A549 (cell line): ENCODE measurements at regions of chr7 and their contacts with region 1.

Region 1: GRCh38 chr7:73726083-73726466 is 6.6 kb upstream of the STX1A start:
- DNase-seq: no peak
- ATAC-seq: peak; percentile 56 to 61
- H3K4me3 ChIP-seq: no peak overlapping the region
- H3K27ac ChIP-seq: peak overlapping the region; percentile 27 to 74; a peak in 4 of 6 replicates
- H3K4me1 ChIP-seq: peaks cover 20% of the 10 kb centered on the region
- CTCF ChIP-seq: no peak
- EP300 ChIP-seq: no peak
- POLR2A ChIP-seq: no peak
- RAD21 ChIP-seq: no peak

Region 2: GRCh38 chr7:73623798-73624668 is 102.0 kb before region 1 on chr7 and contains the start of gene MLXIPL:
- CTCF ChIA-PET with region 1: interaction called, 46 read pairs
- POLR2A ChIA-PET with region 1: no interaction called
- DNase-seq: peak; percentile 78 to 97
- ATAC-seq: peak; percentile 84 to 90
- H3K4me3 ChIP-seq: peak within 1 kb of the TSS; percentile 55
- H3K27ac ChIP-seq: peak within 1 kb of the TSS; percentile 71 to 92
- H3K4me1 ChIP-seq: peaks cover 25% of the 10 kb centered on the region
- CTCF ChIP-seq: no peak
- EP300 ChIP-seq: no peak
- POLR2A ChIP-seq: peak; percentile 48; the same call in 1 of the 2 replicates
- RAD21 ChIP-seq: no peak
- polyA plus RNA-seq, gene MLXIPL: 1.4 and 2.2 TPM in 2 replicates

Region 3: GRCh38 chr7:73667344-73668102 is 58.6 kb before region 1 on chr7 and contains the start of gene VPS37D:
- CTCF ChIA-PET with region 1: interaction called, 86 read pairs
- POLR2A ChIA-PET with region 1: no interaction called
- DNase-seq: peak; percentile 85 to 89
- ATAC-seq: peak; percentile 82 to 91
- H3K4me3 ChIP-seq: peak within 1 kb of the TSS; percentile 90
- H3K27ac ChIP-seq: peak within 1 kb of the TSS; percentile 95
- H3K4me1 ChIP-seq: peaks cover 18% of the 10 kb centered on the region; the same call in 2 of the 3 replicates
- CTCF ChIP-seq: peak; percentile 97
- EP300 ChIP-seq: no peak
- POLR2A ChIP-seq: no peak
- RAD21 ChIP-seq: peak; percentile 71 to 94
- polyA plus RNA-seq, gene VPS37D: 3.3 and 3.8 TPM in 2 replicates

Region 4: GRCh38 chr7:73701357-73701995 is 24.6 kb before region 1 on chr7:
- CTCF ChIA-PET with region 1: interaction called, 139 read pairs
- POLR2A ChIA-PET with region 1: interaction called, 6 read pairs
- DNase-seq: peak; percentile 74 to 95
- ATAC-seq: peak in 1 of 2 experiments; percentile 24; a peak in 3 of 6 replicates
- H3K4me3 ChIP-seq: no peak overlapping the region
- H3K27ac ChIP-seq: peak overlapping the region; percentile 99 to 100
- H3K4me1 ChIP-seq: peaks cover 75% of the 10 kb centered on the region
- CTCF ChIP-seq: peak; percentile 55
- EP300 ChIP-seq: no peak
- POLR2A ChIP-seq: no peak
- RAD21 ChIP-seq: peak; percentile 53 to 70; a peak in 4 of 5 replicates

Region 5: DNA sequence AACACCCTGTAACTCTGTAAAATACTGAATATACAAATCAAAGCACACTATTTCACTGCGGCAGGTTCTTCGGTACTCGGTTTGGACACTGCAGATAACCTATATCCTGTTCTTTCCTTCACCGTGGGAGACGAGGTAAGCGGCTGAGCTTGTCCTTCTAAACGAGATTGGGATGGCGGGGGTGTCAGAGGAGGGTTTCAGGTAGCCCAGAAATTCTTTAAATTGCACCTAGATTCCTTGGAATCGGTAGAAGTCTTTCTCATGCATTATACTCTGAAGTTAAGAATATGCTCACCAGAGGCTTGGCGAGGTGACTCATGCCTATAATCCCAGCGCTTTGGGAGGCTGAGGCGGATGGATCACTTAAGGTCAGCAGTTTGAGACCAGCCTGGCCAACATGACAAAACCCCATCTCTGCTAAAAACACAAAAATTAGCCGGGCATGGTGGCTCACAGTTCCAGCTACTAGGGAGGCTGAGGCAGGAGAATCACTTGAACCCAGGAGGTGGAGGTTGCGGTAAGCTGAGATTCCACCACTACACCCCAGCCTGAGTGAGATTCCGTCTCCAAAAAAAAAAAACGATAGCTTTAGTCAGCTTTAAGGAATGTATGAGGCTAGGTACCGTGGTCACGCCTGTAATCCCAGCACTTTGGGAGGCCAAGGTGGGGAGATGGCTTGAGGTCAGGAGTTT is 473.6 kb after region 1 on chr7:
- CTCF ChIA-PET with region 1: no interaction called
- POLR2A ChIA-PET with region 1: no interaction called
- DNase-seq: no peak
- ATAC-seq: peak in 1 of 2 experiments; percentile 8; a peak in 2 of 6 replicates
- H3K4me3 ChIP-seq: no peak overlapping the region
- H3K27ac ChIP-seq: no peak overlapping the region
- H3K4me1 ChIP-seq: peaks cover 3% of the 10 kb centered on the region; the same call in 2 of the 3 replicates
- CTCF ChIP-seq: no peak
- EP300 ChIP-seq: no peak
- POLR2A ChIP-seq: no peak
- RAD21 ChIP-seq: no peak